Ovary (tissue), 10 donors: ENCODE measurements at regions of chr14 and their contacts with region 1.

Region 1: GRCh38 chr14:50321009-50321660 is 9.0 kb downstream of the DMAC2L start:
- DNase-seq: peak in 4 of 5 donors; percentile 43 to 78 (median 60)
- H3K4me3 ChIP-seq: peak overlapping the region; percentile 23
- H3K27ac ChIP-seq: peak overlapping the region in 1 of 2 donors; percentile 57
- H3K4me1 ChIP-seq: no peaks in the 10 kb centered on the region
- H3K27me3 ChIP-seq: no peaks in the 10 kb centered on the region
- CTCF ChIP-seq: peak; percentile 60 to 82 (median 78)
- EP300 ChIP-seq: no peak
- POLR2A ChIP-seq: no peak

Region 2: GRCh38 chr14:50396631-50397390 is 75.7 kb after region 1 on chr14 and contains the start of gene CDKL1:
- intact Hi-C with region 1: loop called in 1 of 4 experiments (anchors 10 kb)
- DNase-seq: peak; percentile 61 to 83 (median 76)
- H3K4me3 ChIP-seq: peak within 1 kb of the TSS; percentile 55
- H3K27ac ChIP-seq: peak within 1 kb of the TSS; percentile 57 to 90
- H3K4me1 ChIP-seq: peaks cover 20% of the 10 kb centered on the region
- H3K27me3 ChIP-seq: no peaks in the 10 kb centered on the region
- CTCF ChIP-seq: no peak
- EP300 ChIP-seq: no peak
- POLR2A ChIP-seq: peak; percentile 48
- total RNA-seq, gene CDKL1: 17.6 to 69.3 (median 34.1) TPM

Region 3: DNA sequence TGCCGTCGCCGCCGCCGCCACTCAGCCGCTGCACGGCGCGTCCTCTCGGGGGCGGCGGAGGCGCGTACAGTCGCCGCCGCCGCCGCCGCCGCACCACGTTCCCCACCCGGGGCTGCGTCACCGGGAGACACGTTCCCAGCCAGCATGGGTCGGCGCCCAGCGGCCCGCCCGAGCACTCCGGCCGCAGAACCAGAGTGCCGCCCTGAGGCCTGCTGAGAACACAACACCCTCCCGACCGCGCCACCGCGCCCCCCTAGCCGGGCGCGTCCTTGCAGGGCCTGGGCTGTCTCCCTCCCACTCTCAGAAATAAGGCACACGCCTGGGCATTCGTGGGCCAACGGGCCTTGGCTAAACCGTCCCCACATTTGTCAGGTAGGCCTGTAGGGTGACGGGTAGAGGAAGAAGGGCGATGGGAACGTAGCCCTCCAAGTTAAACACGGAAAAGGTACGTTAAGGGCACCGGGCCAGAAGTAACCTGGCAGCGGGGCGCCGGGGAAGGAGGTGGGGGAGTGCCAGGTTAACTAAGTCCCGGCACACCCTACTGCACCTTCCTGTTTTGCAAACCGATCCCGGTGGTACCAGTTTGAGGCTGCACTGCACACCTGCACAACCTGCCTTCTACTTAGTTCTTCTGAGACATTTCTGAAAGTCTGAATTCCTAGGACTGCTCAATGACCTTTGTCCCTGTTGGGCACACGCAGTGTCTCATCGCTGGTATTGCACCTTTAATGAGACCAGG is 211.5 kb after region 1 on chr14 and contains the start of gene MAP4K5:
- intact Hi-C with region 1: loop called (anchors 2 kb)
- DNase-seq: peak; percentile 90 to 93 (median 92)
- H3K4me3 ChIP-seq: peak within 1 kb of the TSS; percentile 85
- H3K27ac ChIP-seq: peak within 1 kb of the TSS; percentile 93 to 97
- H3K4me1 ChIP-seq: peaks cover 11% of the 10 kb centered on the region
- H3K27me3 ChIP-seq: no peaks in the 10 kb centered on the region
- CTCF ChIP-seq: peak; percentile 60 to 98 (median 98)
- EP300 ChIP-seq: no peak
- POLR2A ChIP-seq: peak; percentile 70
- total RNA-seq, gene MAP4K5: 60.8 to 202 (median 69.8) TPM

Region 4: DNA sequence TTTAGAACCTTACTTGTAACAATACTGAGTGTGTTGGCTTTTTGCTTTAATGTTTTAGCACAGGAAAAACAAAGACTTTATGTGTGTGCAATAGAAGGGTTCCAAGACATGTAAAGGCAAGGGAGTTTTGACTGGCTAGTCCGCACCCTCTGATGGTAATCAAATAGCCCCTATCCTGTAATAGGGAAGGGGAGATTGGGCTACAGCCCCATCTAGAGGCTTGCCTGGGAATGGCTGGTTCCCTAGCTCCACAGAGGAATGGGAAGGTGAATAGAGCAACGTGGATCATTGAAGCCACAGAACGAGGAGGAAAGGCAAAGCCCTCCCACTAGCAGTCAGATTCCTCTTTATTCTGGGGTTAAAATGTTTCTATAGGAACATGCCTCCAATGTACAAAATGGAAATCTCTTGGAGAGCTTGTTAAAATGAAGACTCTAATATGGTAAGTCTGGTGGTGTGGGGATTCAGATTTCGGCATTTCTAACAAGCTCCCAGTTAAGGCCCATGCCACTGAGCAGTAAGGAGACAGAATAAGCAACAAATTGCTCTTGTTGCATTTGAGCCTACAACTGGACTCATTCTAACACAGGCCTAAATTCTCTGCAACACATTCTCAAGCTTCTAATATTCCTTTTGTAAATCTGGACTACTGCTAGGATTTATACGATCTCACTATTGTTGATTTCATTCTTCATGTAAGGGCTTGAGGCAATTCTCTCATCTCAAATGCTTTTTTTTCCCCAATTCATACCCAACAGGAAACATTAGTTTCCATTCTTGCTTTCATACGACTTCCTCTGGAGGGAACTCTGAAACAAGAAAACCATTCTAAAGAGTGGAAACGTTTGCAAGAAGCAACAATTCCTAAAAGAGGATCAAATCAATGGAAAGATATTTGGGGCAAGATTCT is 452.8 kb after region 1 on chr14:
- intact Hi-C with region 1: loop called in 2 of 4 experiments (anchors 10 kb)
- DNase-seq: peak in 2 of 5 donors; percentile 38 to 57
- H3K4me3 ChIP-seq: no peak overlapping the region
- H3K27ac ChIP-seq: no peak overlapping the region
- H3K4me1 ChIP-seq: peaks cover 3% of the 10 kb centered on the region
- H3K27me3 ChIP-seq: no peaks in the 10 kb centered on the region
- CTCF ChIP-seq: peak in 2 of 3 donors; percentile 22 to 35
- EP300 ChIP-seq: no peak
- POLR2A ChIP-seq: no peak